CD8-positive, alpha-beta T cell (primary cell): ENCODE measurements at regions of chr20 and their contacts with region 1.

Region 1: DNA sequence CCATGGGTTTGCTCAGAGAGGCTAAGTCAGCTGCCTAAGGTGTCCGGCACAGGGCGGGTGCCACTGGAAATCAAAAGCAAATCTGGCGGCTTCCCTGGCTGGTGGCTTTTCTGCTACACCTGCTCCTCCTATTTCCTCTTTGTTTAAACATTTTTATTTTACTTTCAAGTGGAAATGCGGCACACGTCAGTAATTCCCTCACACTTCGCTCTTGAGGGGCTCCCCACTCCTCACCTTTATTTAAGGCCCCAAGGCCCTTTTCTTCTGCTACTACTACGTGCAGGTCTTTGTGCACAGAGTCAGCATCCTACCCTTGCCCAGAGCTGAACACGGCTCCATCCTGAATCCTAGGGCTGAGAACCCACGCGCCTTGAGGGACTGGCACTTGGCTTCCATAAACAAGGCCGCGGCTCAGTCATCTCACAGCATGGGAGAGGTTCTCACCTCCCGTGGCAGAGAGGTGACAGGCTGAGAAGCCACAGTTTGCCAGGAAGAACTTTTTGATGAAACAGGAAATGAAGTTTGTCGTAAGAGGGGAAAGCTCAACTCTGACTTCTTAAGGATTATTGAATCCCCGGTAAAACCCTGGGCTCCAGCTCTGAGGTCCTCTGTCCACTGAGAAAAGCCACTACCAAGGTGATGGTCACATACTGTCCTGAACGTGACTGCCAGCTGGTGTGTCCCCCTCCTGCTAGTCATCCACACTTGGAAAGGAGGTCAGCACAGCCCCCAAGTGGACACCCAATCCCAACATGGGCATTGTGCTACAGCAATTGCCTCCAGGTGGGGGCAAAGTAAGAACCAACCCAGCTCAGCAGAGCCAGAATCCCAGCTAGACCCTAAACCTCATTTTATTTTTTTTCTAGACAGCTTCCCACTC is 48.0 kb downstream of the NFATC2 start:
- DNase-seq: peak in 6 of 9 experiments; percentile 46 to 86 (median 66)
- ATAC-seq: peak; percentile 49
- H3K4me3 ChIP-seq: peak overlapping the region; percentile 16 to 19
- H3K4me3 Mint-ChIP-seq: peak overlapping the region; percentile 64
- H3K27ac ChIP-seq: peak overlapping the region; percentile 43 to 86
- H3K27ac Mint-ChIP-seq: peak overlapping the region; percentile 91
- H3K4me1 ChIP-seq: peaks cover 80% of the 10 kb centered on the region
- H3K4me1 Mint-ChIP-seq: peaks cover 92% of the 10 kb centered on the region
- H3K27me3 ChIP-seq: no peaks in the 10 kb centered on the region
- H3K27me3 Mint-ChIP-seq: no peaks in the 10 kb centered on the region
- CTCF ChIP-seq: no peak

Region 2: DNA sequence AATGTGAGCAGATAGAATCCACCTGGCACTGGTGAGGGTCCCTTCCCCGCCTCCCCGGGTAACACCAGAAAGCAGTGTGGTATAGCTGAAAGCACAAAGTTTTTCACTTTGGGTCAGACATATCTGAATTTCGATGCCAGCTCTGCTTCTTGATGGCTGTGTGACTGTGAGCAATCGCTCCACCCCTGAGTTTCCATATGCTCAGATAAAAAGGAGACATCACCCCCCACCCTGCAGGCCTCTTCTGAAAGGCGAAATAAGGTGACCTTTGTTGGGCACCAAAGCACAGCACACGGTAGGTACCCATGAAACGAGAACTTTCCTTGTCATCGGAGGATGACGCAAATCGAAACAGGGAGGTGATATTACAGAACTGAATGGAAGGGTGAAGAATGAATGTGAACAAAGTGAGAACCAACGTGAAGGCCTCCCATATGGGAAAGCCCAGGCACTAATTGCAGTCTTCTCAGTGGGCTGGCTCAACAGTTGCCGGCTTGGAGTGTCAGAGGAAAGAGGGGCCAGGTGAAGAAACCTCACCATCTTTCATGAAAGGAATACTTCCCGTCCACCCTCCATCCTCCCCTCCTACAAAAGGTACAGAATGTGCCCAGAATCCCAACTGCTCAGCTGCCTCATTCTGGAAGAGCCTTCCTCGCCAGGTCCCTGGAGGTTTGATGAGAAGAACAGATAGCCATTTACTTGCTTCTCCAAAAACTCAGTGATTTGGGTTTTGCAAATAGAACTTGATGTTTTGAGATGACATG is 13.8 kb before region 1 on chr20:
- CTCF ChIA-PET with region 1: interaction called, 4 read pairs
- POLR2A ChIA-PET with region 1: interaction called, 5 read pairs
- intact Hi-C with region 1: loop called in 1 of 2 experiments (anchors 1 kb)
- DNase-seq: peak in 4 of 9 experiments; percentile 18 to 85 (median 62)
- ATAC-seq: peak; percentile 56
- H3K4me3 ChIP-seq: peak overlapping the region in 1 of 2 experiments; percentile 13
- H3K4me3 Mint-ChIP-seq: peak overlapping the region; percentile 61
- H3K27ac ChIP-seq: peak overlapping the region in 1 of 2 experiments; percentile 83
- H3K27ac Mint-ChIP-seq: peak overlapping the region; percentile 90
- H3K4me1 ChIP-seq: peaks cover 32% of the 10 kb centered on the region
- H3K4me1 Mint-ChIP-seq: peaks cover 83% of the 10 kb centered on the region
- H3K27me3 ChIP-seq: no peaks in the 10 kb centered on the region
- H3K27me3 Mint-ChIP-seq: no peaks in the 10 kb centered on the region
- CTCF ChIP-seq: no peak

Region 3: DNA sequence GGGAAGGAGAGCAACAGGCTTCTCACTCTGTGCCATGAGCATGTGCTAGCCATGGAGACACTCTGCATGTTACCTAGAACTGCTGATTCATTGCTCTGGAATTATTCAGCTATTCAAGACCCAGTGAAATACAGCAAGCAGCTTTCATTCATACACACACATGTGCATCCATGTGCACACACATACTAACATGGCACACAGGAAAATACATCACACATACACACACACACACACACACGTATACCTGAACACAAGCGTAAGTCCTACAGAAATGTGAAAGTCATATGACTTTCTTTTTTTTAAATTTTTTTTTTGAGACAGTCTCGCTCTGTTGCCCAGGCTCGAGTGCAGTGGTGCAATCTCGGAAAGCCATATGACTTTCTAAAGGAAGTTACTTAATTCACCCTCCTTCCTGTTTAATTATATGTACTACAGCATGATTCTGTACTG is 156.2 kb after region 1 on chr20:
- CTCF ChIA-PET with region 1: no interaction called
- POLR2A ChIA-PET with region 1: no interaction called
- intact Hi-C with region 1: no loop called
- DNase-seq: peak in 1 of 9 experiments; percentile 26
- ATAC-seq: no peak
- H3K4me3 ChIP-seq: no peak overlapping the region
- H3K4me3 Mint-ChIP-seq: no peak overlapping the region
- H3K27ac ChIP-seq: no peak overlapping the region
- H3K27ac Mint-ChIP-seq: no peak overlapping the region
- H3K4me1 ChIP-seq: no peaks in the 10 kb centered on the region
- H3K4me1 Mint-ChIP-seq: no peaks in the 10 kb centered on the region
- H3K27me3 ChIP-seq: no peaks in the 10 kb centered on the region
- H3K27me3 Mint-ChIP-seq: no peaks in the 10 kb centered on the region
- CTCF ChIP-seq: no peak